Prostate gland (tissue), 2 donors: ENCODE measurements at regions of chr4 and their contacts with region 1.

Region 1: GRCh38 chr4:139167774-139168444 is 9.1 kb downstream of the ELF2 start:
- DNase-seq: no peak
- H3K4me3 ChIP-seq: no peak overlapping the region
- H3K27ac ChIP-seq: no peak overlapping the region
- H3K4me1 ChIP-seq: no peaks in the 10 kb centered on the region
- H3K27me3 ChIP-seq: no peaks in the 10 kb centered on the region
- CTCF ChIP-seq: peak in 2 of 4 experiments; percentile 36 to 56
- POLR2A ChIP-seq: no peak

Region 2: DNA sequence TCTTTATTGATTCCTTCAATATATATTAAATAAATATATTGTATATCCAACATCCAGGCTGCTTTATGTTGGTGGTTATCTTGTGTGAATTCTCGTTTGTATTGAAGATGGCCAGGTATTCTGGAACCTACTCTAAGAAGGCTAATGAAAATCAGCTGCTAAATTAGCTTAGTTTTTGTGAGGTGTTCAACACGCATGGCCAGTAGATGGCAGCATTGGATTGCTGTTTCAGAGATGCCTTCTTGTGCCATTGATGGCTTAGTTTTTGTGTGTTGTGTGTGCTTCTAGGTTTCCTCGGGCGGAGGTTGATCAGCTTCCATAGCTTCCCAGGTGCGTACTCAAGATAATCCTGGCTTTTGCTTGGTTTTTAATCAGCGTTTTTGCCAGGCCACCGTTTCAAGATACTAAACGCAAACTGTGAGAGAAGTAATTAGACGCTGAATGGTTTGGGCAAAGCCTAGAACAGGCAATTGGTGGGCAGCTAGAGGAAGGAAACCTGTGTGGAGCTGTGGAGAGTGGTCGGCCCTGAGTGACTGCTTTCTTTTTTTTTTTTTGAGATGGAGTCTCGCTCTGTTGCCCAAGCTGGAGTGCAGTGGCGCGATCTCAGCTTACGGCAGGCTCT is 137.2 kb before region 1 on chr4:
- intact Hi-C with region 1: loop called (anchors 5 kb)
- DNase-seq: peak; percentile 82
- H3K4me3 ChIP-seq: no peak overlapping the region
- H3K27ac ChIP-seq: no peak overlapping the region
- H3K4me1 ChIP-seq: no peaks in the 10 kb centered on the region
- H3K27me3 ChIP-seq: no peaks in the 10 kb centered on the region
- CTCF ChIP-seq: peak; percentile 62 to 88 (median 84)
- POLR2A ChIP-seq: no peak

Region 3: GRCh38 chr4:139083956-139084803 is 83.7 kb before region 1 on chr4:
- intact Hi-C with region 1: no loop called
- DNase-seq: peak; percentile 83
- H3K4me3 ChIP-seq: peak overlapping the region; percentile 72 to 78
- H3K27ac ChIP-seq: peak overlapping the region; percentile 95 to 97
- H3K4me1 ChIP-seq: no peaks in the 10 kb centered on the region
- H3K27me3 ChIP-seq: no peaks in the 10 kb centered on the region
- CTCF ChIP-seq: peak in 3 of 4 experiments; percentile 28 to 53 (median 34)
- POLR2A ChIP-seq: peak; percentile 30

Region 4: GRCh38 chr4:139099366-139099982 is 68.4 kb before region 1 on chr4:
- intact Hi-C with region 1: loop called (anchors 5 kb)
- DNase-seq: peak; percentile 74
- H3K4me3 ChIP-seq: no peak overlapping the region
- H3K27ac ChIP-seq: no peak overlapping the region
- H3K4me1 ChIP-seq: no peaks in the 10 kb centered on the region
- H3K27me3 ChIP-seq: no peaks in the 10 kb centered on the region
- CTCF ChIP-seq: peak; percentile 60 to 84 (median 79)
- POLR2A ChIP-seq: no peak

Region 5: GRCh38 chr4:139208404-139208945 is 40.6 kb after region 1 on chr4:
- intact Hi-C with region 1: no loop called
- DNase-seq: no peak
- H3K4me3 ChIP-seq: no peak overlapping the region
- H3K27ac ChIP-seq: no peak overlapping the region
- H3K4me1 ChIP-seq: no peaks in the 10 kb centered on the region
- H3K27me3 ChIP-seq: no peaks in the 10 kb centered on the region
- CTCF ChIP-seq: no peak
- POLR2A ChIP-seq: no peak

Region 6: GRCh38 chr4:139337612-139338011 is 169.7 kb after region 1 on chr4:
- intact Hi-C with region 1: no loop called
- DNase-seq: no peak
- H3K4me3 ChIP-seq: no peak overlapping the region
- H3K27ac ChIP-seq: no peak overlapping the region
- H3K4me1 ChIP-seq: no peaks in the 10 kb centered on the region
- H3K27me3 ChIP-seq: no peaks in the 10 kb centered on the region
- CTCF ChIP-seq: no peak
- POLR2A ChIP-seq: no peak

Region 7: GRCh38 chr4:139550724-139551429 is 383.0 kb after region 1 on chr4:
- intact Hi-C with region 1: no loop called
- DNase-seq: no peak
- H3K4me3 ChIP-seq: no peak overlapping the region
- H3K27ac ChIP-seq: peak overlapping the region in 1 of 2 donors; percentile 21
- H3K4me1 ChIP-seq: no peaks in the 10 kb centered on the region
- H3K27me3 ChIP-seq: no peaks in the 10 kb centered on the region
- CTCF ChIP-seq: no peak
- POLR2A ChIP-seq: no peak